H1 (cell line): ENCODE measurements at regions of chr1 and their contacts with region 1.

Region 1: GRCh38 chr1:109229531-109230127 is 15.9 kb downstream of the SARS1 start:
- DNase-seq: peak; percentile 88 to 96
- H3K4me3 ChIP-seq: peak overlapping the region; percentile 22 to 43 (median 34); a peak in 7 of 8 replicates
- H3K27ac ChIP-seq: peak overlapping the region; percentile 47
- H3K4me1 ChIP-seq: peaks cover 9 to 33% (median 15%) of the 10 kb centered on the region in 4 experiments
- H3K27me3 ChIP-seq: no peaks in the 10 kb centered on the region
- CTCF ChIP-seq: no peak
- EP300 ChIP-seq: peak in 1 of 2 experiments; percentile 75; a peak in 1 of 3 replicates
- POLR2A ChIP-seq: no peak; a peak in 1 of 3 replicates
- RAD21 ChIP-seq: 0 out of 4 replicates have a peak, but pooled peaks of 1 of the 2 experiments have one; percentile 21

Region 2: GRCh38 chr1:109201123-109201703 is 28.4 kb before region 1 on chr1:
- CTCF ChIA-PET with region 1: interaction called, 651 read pairs
- POLR2A ChIA-PET with region 1: no interaction called
- DNase-seq: peak in 1 of 2 experiments; percentile 86
- H3K4me3 ChIP-seq: no peak overlapping the region
- H3K27ac ChIP-seq: no peak overlapping the region
- H3K4me1 ChIP-seq: peaks cover 0 to 4% (median 1%) of the 10 kb centered on the region in 4 experiments; a peak in 1 of 7 replicates
- H3K27me3 ChIP-seq: no peaks in the 10 kb centered on the region; a peak in 1 of 7 replicates
- CTCF ChIP-seq: peak; percentile 65 to 82 (median 75)
- EP300 ChIP-seq: no peak
- POLR2A ChIP-seq: no peak
- RAD21 ChIP-seq: peak; percentile 80 to 90

Region 3: GRCh38 chr1:109239580-109240095 is 10.0 kb after region 1 on chr1:
- CTCF ChIA-PET with region 1: interaction called, 43 read pairs
- POLR2A ChIA-PET with region 1: interaction called, 34 read pairs
- DNase-seq: peak; percentile 65 to 75
- H3K4me3 ChIP-seq: no peak overlapping the region
- H3K27ac ChIP-seq: peak overlapping the region; percentile 13; the same call in 1 of the 2 replicates
- H3K4me1 ChIP-seq: peaks cover 21 to 44% (median 31%) of the 10 kb centered on the region in 4 experiments
- H3K27me3 ChIP-seq: no peaks in the 10 kb centered on the region
- CTCF ChIP-seq: peak; percentile 78 to 91 (median 89)
- EP300 ChIP-seq: 0 out of 3 replicates have a peak, but pooled peaks of 1 of the 2 experiments have one; percentile 3
- POLR2A ChIP-seq: no peak
- RAD21 ChIP-seq: peak; percentile 29 to 60

Region 4: GRCh38 chr1:109319114-109319513 is 89.5 kb after region 1 on chr1:
- CTCF ChIA-PET with region 1: no interaction called
- POLR2A ChIA-PET with region 1: no interaction called
- DNase-seq: no peak
- H3K4me3 ChIP-seq: no peak overlapping the region
- H3K27ac ChIP-seq: no peak overlapping the region
- H3K4me1 ChIP-seq: no peaks in the 10 kb centered on the region; a peak in 1 of 7 replicates
- H3K27me3 ChIP-seq: no peaks in the 10 kb centered on the region
- CTCF ChIP-seq: no peak
- EP300 ChIP-seq: no peak
- POLR2A ChIP-seq: no peak
- RAD21 ChIP-seq: no peak